ENCODE measurements at regions of chrX and their contacts with region 1.

Region 1: DNA sequence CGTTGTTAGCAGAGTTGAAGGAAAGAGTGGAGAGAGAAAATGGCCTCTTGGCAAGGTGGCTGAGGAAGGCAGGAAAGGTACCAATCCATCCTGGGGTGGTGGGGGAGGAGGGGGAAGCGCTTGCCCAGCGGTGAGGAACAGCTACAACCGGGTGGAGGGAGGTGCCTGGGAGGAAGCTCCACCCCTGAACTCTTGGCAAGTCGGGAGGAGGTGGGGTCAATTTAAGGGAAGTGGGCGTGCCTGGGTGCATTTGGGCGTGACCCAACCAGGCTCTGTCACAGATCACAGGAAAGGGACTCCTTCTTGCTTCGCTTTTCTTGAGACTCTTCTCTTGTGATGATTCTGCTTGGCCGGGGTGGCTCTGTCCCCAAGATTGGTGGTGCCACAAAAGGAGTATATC is 41.7 kb downstream of the BCORL1 start:
- DNase-seq: peak; percentile 86
- ATAC-seq: peak; percentile 99
- H3K4me3 ChIP-seq: no peak overlapping the region
- H3K27ac ChIP-seq: no peak overlapping the region
- H3K4me1 ChIP-seq: no peaks in the 10 kb centered on the region
- H3K27me3 ChIP-seq: no peaks in the 10 kb centered on the region
- CTCF ChIP-seq: no peak

Region 2: DNA sequence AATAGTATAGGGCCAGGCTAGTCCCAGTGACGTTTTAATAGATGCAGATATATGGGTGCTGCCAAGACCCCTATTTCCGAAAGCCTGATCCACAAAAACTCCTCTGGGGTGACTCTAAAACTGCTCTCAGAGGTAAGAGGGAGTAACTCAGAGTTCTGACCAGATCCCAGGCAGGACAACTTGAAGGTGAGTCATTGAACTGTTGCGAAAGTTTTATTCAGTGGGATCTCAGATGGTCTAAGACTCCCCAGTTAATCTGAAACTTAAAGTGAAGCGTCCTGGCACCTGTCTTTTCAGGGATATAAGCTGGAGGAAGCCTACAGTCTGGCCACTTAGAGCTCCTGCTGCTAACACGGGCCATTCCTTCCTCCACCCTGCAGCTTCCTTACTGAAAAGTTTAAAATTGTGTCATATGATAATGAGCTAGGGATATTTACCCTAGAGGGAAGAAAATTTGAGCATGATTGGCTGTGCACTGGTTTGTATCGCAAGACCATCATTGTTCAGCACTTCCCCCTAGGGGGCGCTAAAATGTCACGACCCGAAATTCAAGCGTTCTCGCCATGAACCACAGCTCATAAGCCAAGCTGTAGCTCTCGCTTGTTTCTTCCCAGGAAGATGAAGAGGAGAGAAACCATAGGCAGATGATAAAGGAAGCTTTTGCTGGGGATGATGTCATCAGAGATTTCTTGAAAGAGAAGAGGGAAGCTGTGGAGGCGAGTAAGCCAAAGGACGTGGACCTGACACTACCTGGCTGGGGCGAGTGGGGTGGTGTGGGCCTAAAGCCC is 98.6 kb before region 1 on chrX:
- intact Hi-C with region 1: loop called (anchors 10 kb)
- DNase-seq: peak; percentile 64
- ATAC-seq: peak; percentile 91
- H3K4me3 ChIP-seq: no peak overlapping the region
- H3K27ac ChIP-seq: no peak overlapping the region
- H3K4me1 ChIP-seq: no peaks in the 10 kb centered on the region
- H3K27me3 ChIP-seq: no peaks in the 10 kb centered on the region
- CTCF ChIP-seq: peak; percentile 56